Calu3 (cell line): ENCODE measurements at regions of chr6 and their contacts with region 1.

Region 1: GRCh38 chr6:133741375-133741861 is 147.5 kb upstream of the TCF21 start:
- DNase-seq: no peak
- H3K4me3 Mint-ChIP-seq: no peak overlapping the region
- H3K27ac Mint-ChIP-seq: no peak overlapping the region
- H3K4me1 Mint-ChIP-seq: peaks cover 37% of the 10 kb centered on the region
- H3K27me3 Mint-ChIP-seq: no peaks in the 10 kb centered on the region
- CTCF ChIP-seq: no peak

Region 2: DNA sequence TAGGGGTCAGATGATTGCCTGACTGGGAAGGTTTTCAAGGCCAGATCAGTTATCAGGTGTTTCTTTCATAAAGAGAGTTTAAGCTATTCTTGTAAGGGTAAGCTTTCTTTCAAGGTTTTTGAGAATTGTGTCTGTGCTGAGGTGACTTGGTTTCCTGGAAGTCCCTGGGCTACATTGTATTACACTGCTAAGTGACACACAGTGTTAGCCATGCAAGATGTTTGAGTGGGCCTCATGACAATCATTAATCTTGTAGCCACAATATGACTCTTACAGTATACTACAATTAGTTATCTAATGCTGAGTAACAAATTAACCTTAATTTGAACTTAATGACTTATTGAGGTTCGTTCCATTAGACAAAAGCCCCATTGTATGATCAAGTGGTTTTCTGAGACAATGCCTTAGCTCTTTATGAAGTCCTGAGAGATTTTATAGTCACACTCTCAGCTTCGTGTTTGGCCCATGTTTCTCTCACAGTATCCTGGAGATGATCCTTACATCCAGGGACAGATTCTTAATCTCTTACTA is 740.3 kb before region 1 on chr6:
- CTCF ChIA-PET with region 1: no interaction called
- intact Hi-C with region 1: no loop called
- DNase-seq: peak; percentile 13
- H3K4me3 Mint-ChIP-seq: no peak overlapping the region
- H3K27ac Mint-ChIP-seq: peak overlapping the region; percentile 60
- H3K4me1 Mint-ChIP-seq: peaks cover 34% of the 10 kb centered on the region
- H3K27me3 Mint-ChIP-seq: no peaks in the 10 kb centered on the region
- CTCF ChIP-seq: no peak

Region 3: GRCh38 chr6:133804263-133804662 is 62.8 kb after region 1 on chr6:
- CTCF ChIA-PET with region 1: no interaction called
- intact Hi-C with region 1: no loop called
- DNase-seq: no peak
- H3K4me3 Mint-ChIP-seq: no peak overlapping the region
- H3K27ac Mint-ChIP-seq: no peak overlapping the region
- H3K4me1 Mint-ChIP-seq: no peaks in the 10 kb centered on the region
- H3K27me3 Mint-ChIP-seq: no peaks in the 10 kb centered on the region
- CTCF ChIP-seq: no peak

Region 4: GRCh38 chr6:133877116-133877515 is 135.7 kb after region 1 on chr6:
- CTCF ChIA-PET with region 1: no interaction called
- intact Hi-C with region 1: no loop called
- DNase-seq: no peak
- H3K4me3 Mint-ChIP-seq: no peak overlapping the region
- H3K27ac Mint-ChIP-seq: no peak overlapping the region
- H3K4me1 Mint-ChIP-seq: peaks cover 8% of the 10 kb centered on the region
- H3K27me3 Mint-ChIP-seq: peaks cover 16% of the 10 kb centered on the region
- CTCF ChIP-seq: no peak

Region 5: GRCh38 chr6:134609716-134610261 is 868.4 kb after region 1 on chr6:
- CTCF ChIA-PET with region 1: interaction called, 13 read pairs
- intact Hi-C with region 1: no loop called
- DNase-seq: no peak
- H3K4me3 Mint-ChIP-seq: no peak overlapping the region
- H3K27ac Mint-ChIP-seq: no peak overlapping the region
- H3K4me1 Mint-ChIP-seq: peaks cover 6% of the 10 kb centered on the region
- H3K27me3 Mint-ChIP-seq: no peaks in the 10 kb centered on the region
- CTCF ChIP-seq: no peak